ENCODE measurements at regions of chr14 and their contacts with region 1.

Region 1: GRCh38 chr14:103518422-103519042 is 4.1 kb downstream of the CKB start:
- DNase-seq: peak; percentile 62 to 75 (median 72)
- ATAC-seq: peak; percentile 26
- H3K4me3 ChIP-seq: no peak overlapping the region
- H3K27ac ChIP-seq: peak overlapping the region in 2 of 4 donors; percentile 7 to 16
- H3K4me1 ChIP-seq: peaks cover 51% of the 10 kb centered on the region
- H3K27me3 ChIP-seq: no peaks in the 10 kb centered on the region
- CTCF ChIP-seq: peak; percentile 85 to 95 (median 90)
- POLR2A ChIP-seq: no peak

Region 2: DNA sequence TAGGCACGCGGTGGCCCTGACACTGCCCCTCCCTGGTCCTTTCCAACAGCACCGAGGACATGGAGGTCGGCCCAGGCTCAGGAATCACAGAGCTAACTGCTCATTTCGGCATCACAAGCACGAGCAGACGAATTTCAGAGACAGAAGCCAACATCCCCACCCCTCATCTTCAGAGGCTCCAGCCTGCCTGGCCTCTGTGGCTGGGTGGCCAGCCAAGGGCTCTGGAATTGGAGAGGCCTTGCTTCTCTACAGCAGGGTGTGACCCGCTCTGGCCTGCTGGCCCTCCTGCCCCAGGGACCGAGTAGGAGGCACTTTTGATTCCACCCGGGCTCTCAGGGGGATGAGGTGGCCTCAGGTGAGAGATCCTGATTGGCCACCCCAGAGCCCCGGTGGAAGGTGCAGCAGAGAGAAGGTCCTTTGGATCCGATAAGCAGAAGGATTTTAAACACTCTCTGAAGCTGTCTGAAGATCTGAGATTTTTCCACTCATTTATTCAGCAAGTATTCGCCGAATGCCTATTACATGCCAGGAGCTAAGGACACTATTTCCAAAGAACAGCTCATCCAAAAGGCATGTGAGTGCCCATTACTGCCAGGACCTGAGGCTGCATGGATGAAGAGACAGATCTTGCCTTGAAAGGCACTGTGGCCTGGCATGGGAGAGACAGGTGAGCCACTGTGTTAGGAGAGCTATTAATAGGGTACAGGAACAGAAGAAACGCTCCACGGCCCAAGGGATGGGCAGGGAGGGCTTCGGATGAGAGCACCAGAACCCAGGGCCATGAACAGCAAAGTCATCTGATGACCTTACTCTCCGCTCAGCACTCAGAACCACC is 33.7 kb after region 1 on chr14:
- intact Hi-C with region 1: loop called (anchors 5 kb)
- DNase-seq: peak in 2 of 4 donors; percentile 19 to 22
- ATAC-seq: peak; percentile 4
- H3K4me3 ChIP-seq: no peak overlapping the region
- H3K27ac ChIP-seq: peak overlapping the region in 1 of 4 donors; percentile 81
- H3K4me1 ChIP-seq: peaks cover 24% of the 10 kb centered on the region
- H3K27me3 ChIP-seq: no peaks in the 10 kb centered on the region
- CTCF ChIP-seq: no peak
- POLR2A ChIP-seq: no peak

Measured in body of pancreas (tissue), 4 donors.